HCT116 (cell line): ENCODE measurements at regions of chr14 and their contacts with region 1.

Region 1: GRCh38 chr14:21476925-21477681 is at the starts of genes RAB2B and TOX4:
- DNase-seq: peak; percentile 97
- ATAC-seq: peak; percentile 96
- H3K4me3 ChIP-seq: peak within 1 kb of the TSS; percentile 97 to 99
- H3K27ac ChIP-seq: peak within 1 kb of the TSS; percentile 59
- H3K4me1 ChIP-seq: peaks cover 8 to 14% of the 10 kb centered on the region in 2 experiments
- H3K27me3 ChIP-seq: no peaks in the 10 kb centered on the region
- CTCF ChIP-seq: peak; percentile 78 to 99 (median 88)
- POLR2A ChIP-seq: no peak
- RAD21 ChIP-seq: no peak
- total RNA-seq, gene RAB2B: 24.3 TPM
- total RNA-seq, gene TOX4: 58.5 TPM

Region 2: DNA sequence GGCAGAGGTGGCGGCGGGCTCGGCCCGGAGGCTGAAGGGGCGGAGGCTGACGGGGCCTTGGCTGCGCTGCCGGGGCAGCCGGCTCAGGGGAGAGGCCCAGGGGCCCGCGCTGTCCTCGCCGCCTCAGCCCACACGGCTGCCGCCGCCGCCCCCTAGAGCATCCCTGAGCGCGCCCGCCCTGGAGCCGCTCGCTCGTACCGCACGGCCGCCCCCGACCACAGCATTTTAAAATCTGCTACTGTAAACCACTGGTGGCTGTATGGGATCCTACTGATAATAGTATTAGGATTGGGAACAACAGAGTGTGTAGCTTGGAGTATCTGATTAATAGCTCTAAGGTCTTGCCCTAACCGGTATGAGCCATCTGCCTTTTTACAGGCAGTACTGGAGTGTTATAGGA is 753.6 kb before region 1 on chr14:
- CTCF ChIA-PET with region 1: no interaction called
- POLR2A ChIA-PET with region 1: no interaction called
- RAD21 ChIA-PET with region 1: no interaction called
- intact Hi-C with region 1: no loop called
- DNase-seq: no peak
- ATAC-seq: no peak
- H3K4me3 ChIP-seq: no peak overlapping the region
- H3K27ac ChIP-seq: no peak overlapping the region
- H3K4me1 ChIP-seq: no peaks in the 10 kb centered on the region
- H3K27me3 ChIP-seq: peaks cover 23% of the 10 kb centered on the region
- CTCF ChIP-seq: no peak
- POLR2A ChIP-seq: no peak
- RAD21 ChIP-seq: no peak

Region 3: GRCh38 chr14:21437063-21437901 is 39.8 kb before region 1 on chr14:
- CTCF ChIA-PET with region 1: no interaction called
- POLR2A ChIA-PET with region 1: no interaction called
- RAD21 ChIA-PET with region 1: no interaction called
- intact Hi-C with region 1: loop called (anchors 1 kb)
- DNase-seq: peak; percentile 97
- ATAC-seq: peak; percentile 99
- H3K4me3 ChIP-seq: peak overlapping the region; percentile 62 to 64
- H3K27ac ChIP-seq: peak overlapping the region; percentile 61
- H3K4me1 ChIP-seq: peaks cover 11 to 12% of the 10 kb centered on the region in 2 experiments; a peak in 3 of 4 replicates
- H3K27me3 ChIP-seq: no peaks in the 10 kb centered on the region
- CTCF ChIP-seq: no peak
- POLR2A ChIP-seq: no peak
- RAD21 ChIP-seq: no peak

Region 4: GRCh38 chr14:21455911-21456667 is 21.0 kb before region 1 on chr14 and contains the start of gene CHD8:
- CTCF ChIA-PET with region 1: interaction called, 5 read pairs
- POLR2A ChIA-PET with region 1: interaction called, 9 read pairs
- RAD21 ChIA-PET with region 1: no interaction called
- intact Hi-C with region 1: loop called (anchors 1 kb)
- DNase-seq: peak; percentile 99
- ATAC-seq: peak; percentile 98
- H3K4me3 ChIP-seq: peak within 1 kb of the TSS; percentile 87 to 97
- H3K27ac ChIP-seq: peak within 1 kb of the TSS; percentile 93
- H3K4me1 ChIP-seq: peaks cover 10 to 16% of the 10 kb centered on the region in 2 experiments; a peak in 3 of 4 replicates
- H3K27me3 ChIP-seq: no peaks in the 10 kb centered on the region
- CTCF ChIP-seq: peak; percentile 57 to 79 (median 62)
- POLR2A ChIP-seq: peak; percentile 57
- RAD21 ChIP-seq: peak; percentile 41; the same call in 1 of the 2 replicates
- total RNA-seq, gene CHD8: 46.8 TPM

Region 5: DNA sequence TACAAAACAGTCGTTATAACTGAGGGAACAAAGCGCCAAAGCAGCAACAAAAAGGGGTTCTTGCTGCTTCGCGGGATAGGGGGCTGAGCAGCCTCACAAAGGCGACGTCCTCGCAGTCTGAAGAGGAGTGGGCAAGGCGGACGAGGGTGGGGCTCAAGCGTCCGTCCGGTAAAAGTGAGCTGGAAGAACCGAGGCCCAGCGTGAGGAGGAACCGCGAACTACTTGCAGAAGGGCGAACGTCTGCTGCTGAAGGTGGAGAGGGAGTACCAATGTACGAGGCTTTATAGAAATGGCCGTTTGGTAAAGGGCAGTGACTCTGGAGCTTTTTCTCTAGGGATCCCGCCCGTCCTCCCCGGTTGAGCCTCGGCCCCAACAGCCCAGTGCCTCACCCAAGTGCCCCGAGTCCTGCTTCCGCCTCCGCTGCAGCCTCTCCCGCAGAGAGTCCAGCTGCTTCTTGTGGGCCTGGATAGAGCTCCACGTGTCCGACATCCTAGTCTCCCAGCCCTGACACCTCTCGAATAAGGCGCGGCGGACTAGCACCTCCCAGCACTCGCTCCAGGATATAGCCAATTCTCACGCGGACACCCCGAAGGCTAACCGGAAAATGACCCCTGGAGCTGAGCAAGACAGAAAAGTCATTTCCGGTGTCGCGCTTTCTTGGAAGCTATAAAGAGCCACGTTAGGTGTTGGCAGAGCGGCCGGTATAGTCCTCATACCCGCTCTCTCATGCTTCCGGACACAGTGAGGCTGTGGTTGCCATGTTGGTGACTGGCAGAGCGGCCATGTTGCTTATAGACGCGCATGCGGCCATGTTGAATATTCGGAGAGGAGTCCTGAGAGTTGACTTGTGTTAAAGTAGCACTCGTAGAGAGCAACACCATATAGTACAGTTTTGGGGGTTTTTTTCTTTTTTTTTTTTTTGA is 33.9 kb after region 1 on chr14 and contains the start of gene METTL3:
- CTCF ChIA-PET with region 1: no interaction called
- POLR2A ChIA-PET with region 1: interaction called, 3 read pairs
- RAD21 ChIA-PET with region 1: no interaction called
- intact Hi-C with region 1: loop called (anchors 2 kb)
- DNase-seq: peak; percentile 99
- ATAC-seq: peak; percentile 98
- H3K4me3 ChIP-seq: peak within 1 kb of the TSS; percentile 72 to 84
- H3K27ac ChIP-seq: peak within 1 kb of the TSS; percentile 87
- H3K4me1 ChIP-seq: peaks cover 8 to 15% of the 10 kb centered on the region in 2 experiments; a peak in 3 of 4 replicates
- H3K27me3 ChIP-seq: no peaks in the 10 kb centered on the region
- CTCF ChIP-seq: no peak
- POLR2A ChIP-seq: peak; percentile 65
- RAD21 ChIP-seq: no peak
- total RNA-seq, gene METTL3: 62.3 TPM

Region 6: GRCh38 chr14:21643407-21643806 is 166.3 kb after region 1 on chr14:
- CTCF ChIA-PET with region 1: no interaction called
- POLR2A ChIA-PET with region 1: no interaction called
- RAD21 ChIA-PET with region 1: no interaction called
- intact Hi-C with region 1: no loop called
- DNase-seq: no peak
- ATAC-seq: no peak
- H3K4me3 ChIP-seq: no peak overlapping the region
- H3K27ac ChIP-seq: no peak overlapping the region
- H3K4me1 ChIP-seq: no peaks in the 10 kb centered on the region
- H3K27me3 ChIP-seq: peaks cover 16% of the 10 kb centered on the region
- CTCF ChIP-seq: no peak
- POLR2A ChIP-seq: no peak
- RAD21 ChIP-seq: no peak